Activated CD4-positive, alpha-beta T cell treated with anti-CD3 and anti-CD28 coated beads, Interleukin-2, amount 10 ng/mL, durations not matched to agents 24 days and 14 days (primary cell): ENCODE measurements at regions of chr1 and their contacts with region 1.

Region 1: DNA sequence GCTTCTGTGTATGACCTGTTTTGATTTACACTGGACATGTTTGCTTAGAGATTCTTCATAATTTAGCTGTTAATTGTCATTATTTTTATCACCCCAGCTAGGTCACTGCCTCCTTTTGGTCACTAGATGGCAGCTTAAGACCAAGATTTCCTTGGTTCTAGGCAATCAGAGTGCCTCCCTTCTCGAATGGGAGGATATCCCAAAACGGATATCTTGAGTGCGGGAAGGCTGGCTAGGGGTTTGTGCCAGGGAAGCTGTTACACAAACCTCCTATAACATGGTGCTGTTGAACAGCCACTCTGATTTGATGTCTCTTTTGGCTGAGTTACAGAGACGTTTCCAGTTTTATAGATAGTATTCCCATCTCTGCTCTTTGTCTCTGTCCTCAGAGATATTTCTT is 283.5 kb downstream of the S1PR1 start:
- DNase-seq: peak; percentile 70
- H3K4me3 Mint-ChIP-seq: no peak overlapping the region
- H3K27ac Mint-ChIP-seq: no peak overlapping the region
- H3K4me1 Mint-ChIP-seq: no peaks in the 10 kb centered on the region
- H3K27me3 Mint-ChIP-seq: peaks cover 27% of the 10 kb centered on the region

Region 2: GRCh38 chr1:101178688-101179491 is 341.4 kb before region 1 on chr1:
- intact Hi-C with region 1: no loop called
- DNase-seq: peak; percentile 82
- H3K4me3 Mint-ChIP-seq: peak overlapping the region; percentile 77
- H3K27ac Mint-ChIP-seq: peak overlapping the region; percentile 98
- H3K4me1 Mint-ChIP-seq: peaks cover 59% of the 10 kb centered on the region
- H3K27me3 Mint-ChIP-seq: no peaks in the 10 kb centered on the region

Region 3: GRCh38 chr1:101567582-101568189 is 47.4 kb after region 1 on chr1:
- intact Hi-C with region 1: loop called (anchors 1 kb)
- DNase-seq: peak; percentile 81
- H3K4me3 Mint-ChIP-seq: no peak overlapping the region
- H3K27ac Mint-ChIP-seq: no peak overlapping the region
- H3K4me1 Mint-ChIP-seq: no peaks in the 10 kb centered on the region
- H3K27me3 Mint-ChIP-seq: peaks cover 24% of the 10 kb centered on the region

Region 4: GRCh38 chr1:101632548-101633256 is 112.4 kb after region 1 on chr1:
- intact Hi-C with region 1: no loop called
- DNase-seq: no peak
- H3K4me3 Mint-ChIP-seq: no peak overlapping the region
- H3K27ac Mint-ChIP-seq: no peak overlapping the region
- H3K4me1 Mint-ChIP-seq: no peaks in the 10 kb centered on the region
- H3K27me3 Mint-ChIP-seq: no peaks in the 10 kb centered on the region

Region 5: DNA sequence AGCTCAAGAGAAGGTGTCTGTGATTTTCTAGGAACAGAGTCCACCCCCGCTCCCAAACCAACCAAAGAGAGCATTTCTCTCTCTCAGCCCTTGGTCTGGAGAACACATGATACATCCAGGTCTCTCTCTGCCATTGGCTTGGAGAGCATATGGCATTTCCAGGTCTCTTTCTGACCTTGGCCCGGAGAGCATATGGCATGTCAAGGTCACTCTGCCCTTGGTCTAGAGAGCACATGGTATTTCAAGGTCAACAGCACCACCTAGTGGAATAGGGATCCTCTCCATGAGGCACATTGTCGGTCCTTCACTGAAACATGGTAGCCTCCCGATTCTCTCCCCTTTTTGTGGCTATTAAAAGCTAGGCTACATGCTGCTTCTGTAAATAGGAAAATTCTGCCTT is 914.1 kb after region 1 on chr1:
- intact Hi-C with region 1: loop called (anchors 5 kb)
- DNase-seq: peak; percentile 66
- H3K4me3 Mint-ChIP-seq: no peak overlapping the region
- H3K27ac Mint-ChIP-seq: no peak overlapping the region
- H3K4me1 Mint-ChIP-seq: no peaks in the 10 kb centered on the region
- H3K27me3 Mint-ChIP-seq: no peaks in the 10 kb centered on the region